CD8-positive, alpha-beta T cell (primary cell): ENCODE measurements at regions of chr6 and their contacts with region 1.

Region 1: GRCh38 chr6:103183831-103184411 is 1675.8 kb downstream of the HACE1 start:
- DNase-seq: no peak
- ATAC-seq: no peak
- H3K4me3 ChIP-seq: no peak overlapping the region
- H3K4me3 Mint-ChIP-seq: no peak overlapping the region
- H3K27ac ChIP-seq: no peak overlapping the region
- H3K27ac Mint-ChIP-seq: no peak overlapping the region
- H3K4me1 ChIP-seq: no peaks in the 10 kb centered on the region
- H3K4me1 Mint-ChIP-seq: no peaks in the 10 kb centered on the region
- H3K27me3 ChIP-seq: no peaks in the 10 kb centered on the region
- H3K27me3 Mint-ChIP-seq: no peaks in the 10 kb centered on the region
- CTCF ChIP-seq: no peak

Region 2: DNA sequence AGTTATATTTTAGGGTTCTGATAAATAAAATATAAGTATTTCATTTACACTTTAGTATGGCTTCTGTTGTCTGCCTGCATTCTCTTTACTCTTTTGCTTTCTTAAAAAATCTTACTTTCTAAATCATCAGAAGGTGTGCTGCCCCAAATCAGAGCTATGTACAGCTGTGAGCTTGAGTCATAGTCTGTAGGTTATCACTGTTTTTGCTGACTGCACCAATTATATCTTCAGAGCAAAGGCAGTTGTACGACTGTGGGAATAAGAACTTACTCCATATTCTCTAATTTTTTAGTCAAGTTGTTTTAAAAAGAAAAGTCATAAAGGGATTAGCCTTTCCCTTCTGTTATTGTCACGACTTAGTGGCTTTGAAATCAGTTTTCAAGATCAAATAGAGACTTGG is 26.8 kb after region 1 on chr6:
- CTCF ChIA-PET with region 1: no interaction called
- POLR2A ChIA-PET with region 1: no interaction called
- intact Hi-C with region 1: loop called in 1 of 2 experiments (anchors 1 kb)
- DNase-seq: no peak
- ATAC-seq: no peak
- H3K4me3 ChIP-seq: no peak overlapping the region
- H3K4me3 Mint-ChIP-seq: no peak overlapping the region
- H3K27ac ChIP-seq: no peak overlapping the region
- H3K27ac Mint-ChIP-seq: no peak overlapping the region
- H3K4me1 ChIP-seq: no peaks in the 10 kb centered on the region
- H3K4me1 Mint-ChIP-seq: no peaks in the 10 kb centered on the region
- H3K27me3 ChIP-seq: no peaks in the 10 kb centered on the region
- H3K27me3 Mint-ChIP-seq: no peaks in the 10 kb centered on the region
- CTCF ChIP-seq: no peak